Dendritic cell treated with granulocyte-macrophage colony-stimulating factor and Interleukin-4, amounts not matched to agents 40 ng/mL and 50 ng/mL, for 4 days (primary cell): ENCODE measurements at regions of chr7 and their contacts with region 1.

Region 1: GRCh38 chr7:123741940-123742339 is 6.9 kb downstream of the WASL start:
- H3K4me3 Mint-ChIP-seq: no peak overlapping the region
- H3K27ac Mint-ChIP-seq: no peak overlapping the region
- H3K4me1 Mint-ChIP-seq: peaks cover 50% of the 10 kb centered on the region
- H3K27me3 Mint-ChIP-seq: no peaks in the 10 kb centered on the region

Region 2: DNA sequence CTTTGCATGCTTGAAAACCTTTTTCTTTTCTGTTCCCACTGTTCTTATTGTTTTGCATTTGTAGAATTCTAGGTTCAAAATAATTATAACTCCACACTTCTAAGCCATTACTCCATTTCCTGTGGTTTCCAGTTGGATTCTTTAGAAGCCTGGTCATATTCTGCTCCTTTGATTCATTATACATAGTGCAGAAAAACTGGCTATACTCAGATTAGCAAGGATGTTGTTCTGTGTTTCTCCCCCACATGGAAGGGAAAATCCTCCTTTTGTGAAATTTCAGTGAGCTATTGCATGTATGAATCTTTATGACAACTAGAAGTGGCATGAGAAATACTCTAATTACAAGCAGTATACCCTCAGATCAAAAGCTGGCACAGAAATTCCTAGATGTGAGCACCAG is 621.7 kb before region 1 on chr7:
- intact Hi-C with region 1: no loop called
- H3K4me3 Mint-ChIP-seq: no peak overlapping the region
- H3K27ac Mint-ChIP-seq: no peak overlapping the region
- H3K4me1 Mint-ChIP-seq: no peaks in the 10 kb centered on the region
- H3K27me3 Mint-ChIP-seq: no peaks in the 10 kb centered on the region

Region 3: GRCh38 chr7:123729217-123729578 is 12.7 kb before region 1 on chr7:
- intact Hi-C with region 1: loop called (anchors 2 kb)
- H3K4me3 Mint-ChIP-seq: no peak overlapping the region
- H3K27ac Mint-ChIP-seq: no peak overlapping the region
- H3K4me1 Mint-ChIP-seq: peaks cover 37% of the 10 kb centered on the region
- H3K27me3 Mint-ChIP-seq: no peaks in the 10 kb centered on the region

Region 4: GRCh38 chr7:123792547-123792946 is 50.6 kb after region 1 on chr7:
- intact Hi-C with region 1: no loop called
- H3K4me3 Mint-ChIP-seq: no peak overlapping the region
- H3K27ac Mint-ChIP-seq: no peak overlapping the region
- H3K4me1 Mint-ChIP-seq: no peaks in the 10 kb centered on the region
- H3K27me3 Mint-ChIP-seq: no peaks in the 10 kb centered on the region